B cell (primary cell): ENCODE measurements at regions of chr10 and their contacts with region 1.

Region 1: DNA sequence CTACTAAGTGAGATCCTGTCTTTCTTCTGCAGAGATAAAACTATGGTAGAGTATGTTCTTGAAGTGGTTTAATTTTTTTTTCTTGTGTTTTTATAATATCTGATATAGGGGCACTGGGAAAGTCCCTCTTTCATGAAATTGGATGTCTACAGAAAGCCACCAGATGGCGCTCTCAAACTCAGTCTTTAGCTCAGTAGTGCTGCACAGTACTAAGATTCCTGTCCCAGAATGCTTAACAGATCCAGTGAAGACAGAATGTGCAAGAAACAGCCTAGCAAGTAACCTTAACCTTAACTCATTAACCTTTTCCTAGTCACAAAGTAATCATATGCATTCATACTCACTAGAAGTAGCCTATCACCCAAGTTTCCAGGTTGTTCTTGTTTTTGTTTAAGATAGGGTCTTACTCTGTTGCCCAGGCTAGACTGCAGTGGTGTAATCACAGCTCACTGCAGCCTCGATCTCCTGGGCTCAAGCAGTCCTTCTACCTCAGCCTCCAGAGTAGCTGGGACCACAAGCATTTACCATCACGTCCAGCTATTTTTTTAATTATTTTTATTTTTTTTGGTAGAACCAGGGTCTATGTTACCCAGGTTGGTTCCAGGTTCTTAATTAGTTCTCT is 56.7 kb downstream of the IDE start:
- DNase-seq: peak; percentile 84
- ATAC-seq: peak; percentile 88
- H3K4me3 ChIP-seq: no peak overlapping the region
- H3K4me3 Mint-ChIP-seq: no peak overlapping the region
- H3K27ac ChIP-seq: no peak overlapping the region
- H3K27ac Mint-ChIP-seq: no peak overlapping the region
- H3K4me1 ChIP-seq: no peaks in the 10 kb centered on the region
- H3K4me1 Mint-ChIP-seq: no peaks in the 10 kb centered on the region
- H3K27me3 ChIP-seq: no peaks in the 10 kb centered on the region
- H3K27me3 Mint-ChIP-seq: no peaks in the 10 kb centered on the region
- CTCF ChIP-seq: peak; percentile 82

Region 2: GRCh38 chr10:92240289-92241157 is 276.6 kb before region 1 on chr10:
- CTCF ChIA-PET with region 1: no interaction called
- POLR2A ChIA-PET with region 1: no interaction called
- intact Hi-C with region 1: no loop called
- DNase-seq: peak; percentile 83
- ATAC-seq: peak; percentile 72
- H3K4me3 ChIP-seq: peak overlapping the region; percentile 63 to 99 (median 91)
- H3K4me3 Mint-ChIP-seq: peak overlapping the region; percentile 96
- H3K27ac ChIP-seq: peak overlapping the region; percentile 7 to 37
- H3K27ac Mint-ChIP-seq: peak overlapping the region; percentile 93
- H3K4me1 ChIP-seq: peaks cover 19 to 30% of the 10 kb centered on the region in 2 donors
- H3K4me1 Mint-ChIP-seq: peaks cover 47% of the 10 kb centered on the region
- H3K27me3 ChIP-seq: no peaks in the 10 kb centered on the region
- H3K27me3 Mint-ChIP-seq: no peaks in the 10 kb centered on the region
- CTCF ChIP-seq: no peak

Region 3: GRCh38 chr10:92377962-92378361 is 139.2 kb before region 1 on chr10:
- CTCF ChIA-PET with region 1: no interaction called
- POLR2A ChIA-PET with region 1: no interaction called
- intact Hi-C with region 1: no loop called
- DNase-seq: no peak
- ATAC-seq: no peak
- H3K4me3 ChIP-seq: no peak overlapping the region
- H3K4me3 Mint-ChIP-seq: no peak overlapping the region
- H3K27ac ChIP-seq: no peak overlapping the region
- H3K27ac Mint-ChIP-seq: no peak overlapping the region
- H3K4me1 ChIP-seq: no peaks in the 10 kb centered on the region
- H3K4me1 Mint-ChIP-seq: no peaks in the 10 kb centered on the region
- H3K27me3 ChIP-seq: peaks cover 0 to 2% (median 0%) of the 10 kb centered on the region in 4 experiments
- H3K27me3 Mint-ChIP-seq: peaks cover 17% of the 10 kb centered on the region
- CTCF ChIP-seq: no peak

Region 4: GRCh38 chr10:92530421-92530820 is 13.3 kb after region 1 on chr10:
- CTCF ChIA-PET with region 1: interaction called, 17 read pairs
- POLR2A ChIA-PET with region 1: no interaction called
- intact Hi-C with region 1: no loop called
- DNase-seq: no peak
- ATAC-seq: no peak
- H3K4me3 ChIP-seq: no peak overlapping the region
- H3K4me3 Mint-ChIP-seq: no peak overlapping the region
- H3K27ac ChIP-seq: no peak overlapping the region
- H3K27ac Mint-ChIP-seq: no peak overlapping the region
- H3K4me1 ChIP-seq: no peaks in the 10 kb centered on the region
- H3K4me1 Mint-ChIP-seq: no peaks in the 10 kb centered on the region
- H3K27me3 ChIP-seq: no peaks in the 10 kb centered on the region
- H3K27me3 Mint-ChIP-seq: no peaks in the 10 kb centered on the region
- CTCF ChIP-seq: no peak

Region 5: DNA sequence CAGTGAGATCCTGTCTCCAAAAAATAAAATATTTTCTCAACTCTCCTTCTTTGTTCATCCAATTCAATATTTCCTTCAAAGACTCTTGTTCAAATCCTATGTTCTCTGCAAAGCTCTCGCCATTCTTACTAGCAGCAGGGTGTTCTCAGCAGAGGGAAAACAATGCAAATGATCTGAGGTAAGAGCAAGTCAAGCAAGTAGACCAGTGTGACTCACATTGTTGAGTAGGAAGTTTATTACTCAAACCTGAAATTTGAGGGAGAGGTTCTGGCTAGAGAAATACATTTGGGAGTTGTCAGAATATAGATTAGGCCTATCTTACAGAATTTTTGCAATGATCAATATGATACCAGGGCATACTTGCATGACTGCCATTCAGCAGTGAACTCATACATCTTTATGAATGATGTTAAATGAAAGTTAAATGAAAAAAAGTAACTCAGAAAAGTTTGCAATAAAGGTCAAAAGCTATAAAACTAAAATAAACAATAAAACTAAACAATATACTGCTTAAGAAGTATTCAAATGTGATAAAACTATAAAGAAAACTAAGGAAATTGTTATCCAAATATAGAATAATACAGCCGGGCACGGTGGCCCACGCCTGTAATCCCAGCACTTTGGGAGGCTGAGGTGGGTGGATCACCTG is 50.9 kb after region 1 on chr10:
- CTCF ChIA-PET with region 1: interaction called, 154 read pairs
- POLR2A ChIA-PET with region 1: no interaction called
- intact Hi-C with region 1: no loop called
- DNase-seq: no peak
- ATAC-seq: peak; percentile 73
- H3K4me3 ChIP-seq: no peak overlapping the region
- H3K4me3 Mint-ChIP-seq: peak overlapping the region; percentile 35
- H3K27ac ChIP-seq: no peak overlapping the region
- H3K27ac Mint-ChIP-seq: peak overlapping the region; percentile 3
- H3K4me1 ChIP-seq: peaks cover 16 to 23% of the 10 kb centered on the region in 2 donors
- H3K4me1 Mint-ChIP-seq: peaks cover 37% of the 10 kb centered on the region
- H3K27me3 ChIP-seq: no peaks in the 10 kb centered on the region
- H3K27me3 Mint-ChIP-seq: no peaks in the 10 kb centered on the region
- CTCF ChIP-seq: no peak

Region 6: GRCh38 chr10:92640110-92640509 is 123.0 kb after region 1 on chr10:
- CTCF ChIA-PET with region 1: interaction called, 3 read pairs
- POLR2A ChIA-PET with region 1: no interaction called
- intact Hi-C with region 1: loop called (anchors 5 kb)
- DNase-seq: no peak
- ATAC-seq: no peak
- H3K4me3 ChIP-seq: no peak overlapping the region
- H3K4me3 Mint-ChIP-seq: no peak overlapping the region
- H3K27ac ChIP-seq: no peak overlapping the region
- H3K27ac Mint-ChIP-seq: no peak overlapping the region
- H3K4me1 ChIP-seq: no peaks in the 10 kb centered on the region
- H3K4me1 Mint-ChIP-seq: peaks cover 10% of the 10 kb centered on the region
- H3K27me3 ChIP-seq: no peaks in the 10 kb centered on the region
- H3K27me3 Mint-ChIP-seq: no peaks in the 10 kb centered on the region
- CTCF ChIP-seq: no peak

Region 7: DNA sequence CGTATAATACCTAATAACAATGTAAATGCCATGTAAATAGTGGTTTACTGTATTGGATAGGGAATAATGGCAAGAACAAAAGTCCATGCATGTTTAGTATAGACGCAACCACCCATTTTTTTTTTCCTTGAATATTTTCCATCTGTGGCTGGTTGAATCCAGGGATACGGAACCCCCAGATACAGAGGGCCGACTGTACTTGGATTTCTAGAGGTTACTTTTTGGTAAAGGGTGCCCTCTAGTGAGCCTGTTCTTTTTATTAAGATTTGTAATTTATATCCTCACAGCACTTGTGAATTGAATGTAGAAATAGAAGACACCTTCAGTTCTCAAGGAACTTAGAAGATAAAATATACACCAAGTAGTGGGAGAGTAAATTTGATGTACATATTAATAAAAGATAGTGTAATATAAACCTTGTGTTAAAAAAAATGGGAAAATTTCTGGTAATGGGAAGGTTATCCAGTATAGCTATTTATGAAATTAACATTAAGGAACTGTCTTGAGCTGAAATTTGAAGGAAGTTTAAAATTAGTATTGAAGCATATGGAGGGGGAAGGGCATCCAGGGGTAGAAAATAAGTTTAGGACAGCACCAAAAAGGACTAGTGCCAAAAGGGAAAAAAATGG is 363.2 kb after region 1 on chr10:
- CTCF ChIA-PET with region 1: interaction called, 27 read pairs
- POLR2A ChIA-PET with region 1: no interaction called
- intact Hi-C with region 1: loop called (anchors 1 kb)
- DNase-seq: peak; percentile 70
- ATAC-seq: peak; percentile 39
- H3K4me3 ChIP-seq: no peak overlapping the region
- H3K4me3 Mint-ChIP-seq: no peak overlapping the region
- H3K27ac ChIP-seq: no peak overlapping the region
- H3K27ac Mint-ChIP-seq: no peak overlapping the region
- H3K4me1 ChIP-seq: peaks cover 0 to 12% of the 10 kb centered on the region in 2 donors
- H3K4me1 Mint-ChIP-seq: peaks cover 29% of the 10 kb centered on the region
- H3K27me3 ChIP-seq: no peaks in the 10 kb centered on the region
- H3K27me3 Mint-ChIP-seq: no peaks in the 10 kb centered on the region
- CTCF ChIP-seq: peak; percentile 78